T-cell (primary cell): ENCODE measurements at regions of chr13 and their contacts with region 1.

Region 1: GRCh38 chr13:73754727-73755292 is 379.4 kb downstream of the KLF12 start:
- DNase-seq: peak in 10 of 35 experiments; percentile 2 to 79 (median 14)
- ATAC-seq: peak; percentile 57 to 77 (median 71)
- H3K4me3 ChIP-seq: no peak overlapping the region
- H3K4me3 Mint-ChIP-seq: peak overlapping the region in 1 of 3 donors; percentile 2
- H3K27ac ChIP-seq: no peak overlapping the region
- H3K27ac Mint-ChIP-seq: peak overlapping the region; percentile 82 to 83
- H3K4me1 ChIP-seq: peaks cover 3 to 9% of the 10 kb centered on the region in 2 experiments
- H3K4me1 Mint-ChIP-seq: peaks cover 45 to 63% (median 53%) of the 10 kb centered on the region in 3 donors
- H3K27me3 ChIP-seq: no peaks in the 10 kb centered on the region
- H3K27me3 Mint-ChIP-seq: no peaks in the 10 kb centered on the region

Region 2: DNA sequence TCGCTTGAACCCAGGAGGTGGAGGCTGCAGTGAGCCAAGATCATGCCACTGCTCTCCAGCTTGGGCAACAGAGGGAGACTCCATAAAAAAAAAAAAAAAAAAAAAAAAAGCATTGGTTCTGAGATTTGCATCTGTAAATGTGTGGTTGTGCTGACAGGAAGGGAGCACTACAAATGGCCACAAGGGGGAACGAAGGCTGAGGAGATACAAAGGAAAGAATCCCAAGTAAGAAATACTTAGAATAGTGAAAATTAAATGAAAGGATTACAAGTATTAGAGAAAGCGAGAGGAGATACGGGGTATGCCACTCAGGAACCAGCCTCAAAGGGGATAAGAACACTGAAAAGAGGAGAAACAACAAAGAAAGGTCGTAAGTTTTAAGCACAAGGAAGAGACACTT is 94.5 kb after region 1 on chr13:
- CTCF ChIA-PET with region 1: interaction called in 1 of 2 experiments, 12 read pairs
- POLR2A ChIA-PET with region 1: no interaction called
- DNase-seq: peak in 20 of 35 experiments; percentile 5 to 58 (median 16)
- ATAC-seq: peak in 2 of 4 experiments; percentile 46 to 60
- H3K4me3 ChIP-seq: no peak overlapping the region
- H3K4me3 Mint-ChIP-seq: no peak overlapping the region
- H3K27ac ChIP-seq: no peak overlapping the region
- H3K27ac Mint-ChIP-seq: peak overlapping the region; percentile 24 to 25
- H3K4me1 ChIP-seq: peaks cover 5 to 8% of the 10 kb centered on the region in 2 experiments
- H3K4me1 Mint-ChIP-seq: peaks cover 33 to 64% (median 57%) of the 10 kb centered on the region in 3 donors
- H3K27me3 ChIP-seq: no peaks in the 10 kb centered on the region
- H3K27me3 Mint-ChIP-seq: no peaks in the 10 kb centered on the region